HepG2 (cell line): ENCODE measurements at regions of chr17 and their contacts with region 1.

Region 1: GRCh38 chr17:58364270-58364942 is 12.4 kb upstream of the SUPT4H1 start:
- DNase-seq: peak; percentile 84
- ATAC-seq: peak; percentile 92
- H3K4me3 ChIP-seq: peak overlapping the region in 1 of 3 experiments; percentile 32; a peak in 2 of 6 replicates
- H3K27ac ChIP-seq: peak overlapping the region; percentile 89
- H3K4me1 ChIP-seq: peaks cover 94% of the 10 kb centered on the region
- H3K27me3 ChIP-seq: no peaks in the 10 kb centered on the region
- CTCF ChIP-seq: peak; percentile 16; the same call in 1 of the 2 replicates
- EP300 ChIP-seq: peak in 1 of 2 experiments; percentile 80; a peak in 1 of 4 replicates
- POLR2A ChIP-seq: peak; percentile 20 to 58; a peak in 1 of 4 replicates
- RAD21 ChIP-seq: peak; percentile 1

Region 2: GRCh38 chr17:58270476-58271215 is 93.8 kb before region 1 on chr17:
- CTCF ChIA-PET with region 1: no interaction called
- POLR2A ChIA-PET with region 1: no interaction called
- in situ Hi-C with region 1: no loop called
- intact Hi-C with region 1: no loop called
- DNase-seq: no peak
- ATAC-seq: peak; percentile 66
- H3K4me3 ChIP-seq: no peak overlapping the region
- H3K27ac ChIP-seq: no peak overlapping the region
- H3K4me1 ChIP-seq: no peaks in the 10 kb centered on the region
- H3K27me3 ChIP-seq: peaks cover 4 to 62% of the 10 kb centered on the region in 2 experiments; a peak in 4 of 5 replicates
- CTCF ChIP-seq: no peak
- EP300 ChIP-seq: no peak
- POLR2A ChIP-seq: no peak
- RAD21 ChIP-seq: no peak

Region 3: DNA sequence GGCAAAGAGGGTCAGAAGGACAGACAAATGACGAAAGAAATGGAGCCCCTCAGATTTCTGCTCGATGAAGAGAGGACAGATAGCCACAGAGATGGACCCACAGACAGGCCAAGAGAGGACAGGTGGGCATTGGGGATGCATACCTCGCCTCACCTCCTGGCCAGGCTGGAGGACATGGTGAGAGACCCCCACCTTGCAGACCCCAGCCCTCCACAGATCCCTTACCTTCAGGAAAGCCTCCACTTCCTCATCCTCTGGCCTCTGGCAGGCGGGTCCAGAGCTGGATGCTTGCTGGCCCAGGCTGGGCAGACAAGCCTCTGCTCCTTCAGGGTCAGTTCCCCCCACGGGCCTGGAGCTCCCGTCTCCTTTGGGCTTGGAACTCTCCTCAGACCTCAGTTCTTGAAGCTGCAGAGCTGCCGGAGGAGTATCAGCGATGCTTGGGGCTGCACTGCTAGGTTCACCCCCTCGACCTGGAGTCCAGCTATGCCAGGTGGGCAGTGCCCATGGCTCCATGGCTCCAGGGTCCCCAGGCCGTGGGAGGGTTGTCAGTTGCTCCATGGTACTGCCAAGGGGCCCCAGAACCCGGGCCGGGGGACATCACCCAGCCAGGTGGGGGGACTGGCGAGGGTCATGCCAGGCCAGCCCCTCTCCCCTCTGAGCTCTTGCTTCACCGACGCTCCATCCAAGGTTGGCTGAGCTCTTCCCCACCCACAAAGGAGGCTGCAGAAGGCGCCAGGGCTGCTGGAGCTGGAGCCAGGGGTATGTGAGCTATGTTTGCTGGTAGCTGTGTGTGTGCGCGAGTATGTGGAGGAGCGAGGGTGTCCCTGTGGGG is 36.8 kb before region 1 on chr17:
- CTCF ChIA-PET with region 1: no interaction called
- POLR2A ChIA-PET with region 1: no interaction called
- in situ Hi-C with region 1: no loop called
- intact Hi-C with region 1: no loop called
- DNase-seq: no peak
- ATAC-seq: peak; percentile 9; the same call in 2 of the 3 replicates
- H3K4me3 ChIP-seq: no peak overlapping the region; a peak in 1 of 6 replicates
- H3K27ac ChIP-seq: no peak overlapping the region
- H3K4me1 ChIP-seq: peaks cover 29% of the 10 kb centered on the region
- H3K27me3 ChIP-seq: peaks cover 20 to 65% of the 10 kb centered on the region in 2 experiments
- CTCF ChIP-seq: no peak
- EP300 ChIP-seq: no peak
- POLR2A ChIP-seq: no peak
- RAD21 ChIP-seq: no peak

Region 4: DNA sequence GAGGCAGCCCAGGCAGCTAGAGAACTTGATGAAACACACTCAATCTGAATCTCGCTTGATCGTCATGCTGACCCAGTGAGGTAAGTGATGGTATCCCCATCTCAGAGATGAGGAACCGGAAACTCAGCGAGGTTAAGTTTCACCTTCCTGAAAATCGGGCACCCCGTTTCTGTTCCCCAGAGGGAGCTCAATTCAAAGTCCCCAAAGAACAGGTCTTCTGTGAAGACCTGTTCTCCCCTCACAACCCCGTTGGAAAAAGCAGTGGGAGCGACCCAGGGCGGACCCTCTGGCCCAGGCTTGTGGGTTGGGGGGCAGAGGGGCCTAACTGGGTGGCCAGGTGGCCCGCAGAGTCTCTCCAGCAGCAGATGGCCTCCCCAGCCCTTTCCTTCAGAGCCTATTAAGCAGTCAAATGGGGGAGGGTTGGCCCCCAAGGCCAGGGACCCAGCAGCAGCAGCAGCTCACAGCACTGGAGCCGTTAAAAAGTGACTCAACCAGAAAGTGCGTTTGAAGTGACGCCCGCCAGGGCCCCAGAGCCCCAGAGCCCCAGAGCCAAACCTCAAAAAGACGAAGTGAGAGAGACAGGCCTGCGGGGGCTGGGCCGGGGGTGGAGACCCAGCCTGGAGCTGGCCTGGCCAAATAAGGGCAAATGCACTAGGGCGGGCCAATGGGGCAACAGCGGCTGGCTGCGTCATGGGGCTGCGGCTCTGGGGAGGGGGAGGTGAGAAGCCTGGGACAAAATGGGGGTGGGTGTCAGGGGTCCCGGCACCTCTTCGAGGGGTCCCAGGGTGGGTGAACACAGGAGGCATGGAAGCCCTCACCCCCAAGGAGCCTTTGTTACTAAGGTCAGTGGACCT is 26.6 kb before region 1 on chr17:
- CTCF ChIA-PET with region 1: no interaction called
- POLR2A ChIA-PET with region 1: interaction called, 11 read pairs
- in situ Hi-C with region 1: no loop called
- intact Hi-C with region 1: no loop called
- DNase-seq: peak; percentile 82
- ATAC-seq: peak; percentile 71
- H3K4me3 ChIP-seq: peak overlapping the region; percentile 3 to 60 (median 5); a peak in 3 of 6 replicates
- H3K27ac ChIP-seq: peak overlapping the region; percentile 24
- H3K4me1 ChIP-seq: peaks cover 62% of the 10 kb centered on the region
- H3K27me3 ChIP-seq: no peaks in the 10 kb centered on the region
- CTCF ChIP-seq: no peak
- EP300 ChIP-seq: no peak
- POLR2A ChIP-seq: no peak
- RAD21 ChIP-seq: no peak

Region 5: DNA sequence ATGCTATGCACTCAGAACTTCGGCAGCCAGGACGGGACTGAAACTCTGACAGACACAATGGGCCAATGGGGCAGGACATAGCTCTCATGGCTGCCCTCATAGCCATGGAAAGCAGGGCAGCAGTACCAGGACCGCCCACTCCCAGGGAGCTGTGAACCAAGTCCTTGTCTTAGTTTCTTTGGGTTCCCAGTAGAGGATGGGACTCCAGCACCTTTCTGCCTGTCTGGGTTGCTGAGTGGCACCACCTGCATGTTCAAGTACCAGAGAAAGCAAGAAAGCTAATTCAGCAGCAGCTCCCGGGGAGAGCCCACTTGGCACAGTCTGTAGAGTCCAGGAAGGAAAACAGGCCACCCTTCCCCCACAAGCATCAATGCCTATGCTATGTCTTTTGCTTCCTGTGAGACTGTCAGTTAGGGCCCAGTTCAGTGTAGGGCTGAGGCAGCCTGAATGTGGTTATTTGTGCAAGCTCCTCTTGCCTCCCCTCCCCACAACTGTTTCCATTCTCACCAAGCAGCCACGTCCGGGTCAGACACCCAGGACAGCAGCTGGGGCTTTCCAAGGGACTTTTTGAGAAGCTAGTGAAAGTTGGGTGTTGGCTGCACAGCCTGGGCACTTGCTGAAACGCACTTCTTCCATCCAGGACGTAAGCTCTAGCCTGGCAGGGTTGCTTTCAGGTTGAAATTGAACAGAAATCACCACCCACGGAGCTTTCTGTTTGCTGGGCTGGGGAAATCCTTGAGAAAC is 20.2 kb before region 1 on chr17:
- CTCF ChIA-PET with region 1: no interaction called
- POLR2A ChIA-PET with region 1: interaction called, 252 read pairs
- in situ Hi-C with region 1: no loop called
- intact Hi-C with region 1: no loop called
- DNase-seq: no peak
- ATAC-seq: peak; percentile 10
- H3K4me3 ChIP-seq: no peak overlapping the region
- H3K27ac ChIP-seq: no peak overlapping the region
- H3K4me1 ChIP-seq: peaks cover 5% of the 10 kb centered on the region
- H3K27me3 ChIP-seq: no peaks in the 10 kb centered on the region
- CTCF ChIP-seq: no peak
- EP300 ChIP-seq: no peak
- POLR2A ChIP-seq: peak; percentile 18 to 39; a peak in 3 of 4 replicates
- RAD21 ChIP-seq: no peak

Region 6: DNA sequence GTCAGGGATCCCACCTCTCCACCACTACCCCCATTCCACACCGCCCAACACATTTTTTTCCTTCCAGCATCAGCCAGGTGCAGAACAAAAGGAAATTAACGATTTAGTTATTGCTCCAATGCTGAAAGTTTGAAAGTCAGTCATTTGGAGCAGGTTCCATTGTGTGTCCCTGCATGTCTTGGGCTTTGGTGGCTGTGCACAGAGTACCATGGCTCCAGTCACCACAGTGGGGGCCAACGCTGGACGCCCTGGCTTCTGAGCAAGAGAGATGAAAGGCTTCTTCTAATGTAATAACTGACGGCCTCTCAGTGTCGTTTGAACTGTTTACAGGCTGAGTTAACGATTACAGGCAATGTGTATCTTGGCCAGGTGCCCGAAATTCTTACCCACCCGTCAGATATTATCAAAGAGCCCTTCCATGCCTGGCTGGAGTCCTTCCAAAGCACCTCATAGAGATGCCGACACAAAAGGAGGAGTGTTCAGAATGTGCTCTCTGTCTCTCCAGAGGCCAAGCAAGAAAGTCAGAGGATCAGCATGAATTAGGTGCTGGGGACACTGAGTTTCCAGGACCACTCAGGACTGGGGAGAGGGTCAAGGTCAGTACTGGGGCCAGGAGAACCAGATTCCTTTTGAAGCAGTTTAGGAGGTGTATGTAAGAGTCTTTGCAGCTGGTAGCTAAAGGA is 27.0 kb after region 1 on chr17:
- CTCF ChIA-PET with region 1: no interaction called
- POLR2A ChIA-PET with region 1: interaction called, 58 read pairs
- in situ Hi-C with region 1: no loop called
- intact Hi-C with region 1: loop called (anchors 1 kb)
- DNase-seq: peak; percentile 100
- ATAC-seq: peak; percentile 96
- H3K4me3 ChIP-seq: peak overlapping the region in 2 of 3 experiments; percentile 8 to 36; a peak in 1 of 6 replicates
- H3K27ac ChIP-seq: peak overlapping the region; percentile 93
- H3K4me1 ChIP-seq: peaks cover 97% of the 10 kb centered on the region
- H3K27me3 ChIP-seq: no peaks in the 10 kb centered on the region
- CTCF ChIP-seq: peak; percentile 24; the same call in 1 of the 2 replicates
- EP300 ChIP-seq: peak; percentile 99 to 100
- POLR2A ChIP-seq: peak; percentile 86 to 95
- RAD21 ChIP-seq: peak; percentile 66; the same call in 1 of the 2 replicates

Region 7: DNA sequence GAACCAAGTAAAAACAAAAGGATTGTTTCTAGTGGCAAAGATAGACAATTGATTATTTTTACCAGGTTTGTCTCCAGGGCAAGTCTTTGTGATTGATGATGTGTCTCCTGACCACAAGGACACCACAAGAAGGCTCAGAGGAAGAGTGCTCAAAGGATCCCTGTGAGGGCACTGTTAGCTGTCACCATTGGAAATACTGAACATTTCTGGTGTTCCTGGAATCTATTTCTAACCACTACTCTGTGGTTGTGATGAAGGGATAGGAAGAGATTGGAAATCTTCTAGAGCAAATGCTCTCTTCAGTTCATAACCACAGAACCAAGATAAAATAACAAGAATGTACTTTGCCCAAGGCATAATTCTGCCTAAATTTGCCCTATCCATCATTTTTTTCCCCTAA is 37.6 kb after region 1 on chr17:
- CTCF ChIA-PET with region 1: no interaction called
- POLR2A ChIA-PET with region 1: interaction called, 28 read pairs
- in situ Hi-C with region 1: no loop called
- intact Hi-C with region 1: no loop called
- DNase-seq: no peak
- ATAC-seq: no peak
- H3K4me3 ChIP-seq: no peak overlapping the region
- H3K27ac ChIP-seq: peak overlapping the region; percentile 22
- H3K4me1 ChIP-seq: peaks cover 100% of the 10 kb centered on the region
- H3K27me3 ChIP-seq: no peaks in the 10 kb centered on the region
- CTCF ChIP-seq: no peak
- EP300 ChIP-seq: no peak
- POLR2A ChIP-seq: no peak
- RAD21 ChIP-seq: no peak